Psoas muscle (tissue), 8 donors: ENCODE measurements at regions of chr3 and their contacts with region 1.

Region 1: GRCh38 chr3:51498876-51499738 is 708 bp downstream of the DCAF1 start:
- DNase-seq: peak; percentile 94 to 97
- ATAC-seq: peak; percentile 82 to 84 (median 84)
- H3K4me3 ChIP-seq: peak overlapping the region; percentile 93
- H3K27ac ChIP-seq: peak overlapping the region; percentile 99
- H3K4me1 ChIP-seq: peaks cover 9% of the 10 kb centered on the region
- H3K27me3 ChIP-seq: no peaks in the 10 kb centered on the region
- CTCF ChIP-seq: no peak

Region 2: GRCh38 chr3:51401735-51402134 is 97.4 kb before region 1 on chr3:
- intact Hi-C with region 1: loop called in 1 of 2 experiments (anchors 5 kb)
- DNase-seq: no peak
- ATAC-seq: no peak
- H3K4me3 ChIP-seq: no peak overlapping the region
- H3K27ac ChIP-seq: no peak overlapping the region
- H3K4me1 ChIP-seq: peaks cover 1% of the 10 kb centered on the region
- H3K27me3 ChIP-seq: no peaks in the 10 kb centered on the region
- CTCF ChIP-seq: no peak

Region 3: DNA sequence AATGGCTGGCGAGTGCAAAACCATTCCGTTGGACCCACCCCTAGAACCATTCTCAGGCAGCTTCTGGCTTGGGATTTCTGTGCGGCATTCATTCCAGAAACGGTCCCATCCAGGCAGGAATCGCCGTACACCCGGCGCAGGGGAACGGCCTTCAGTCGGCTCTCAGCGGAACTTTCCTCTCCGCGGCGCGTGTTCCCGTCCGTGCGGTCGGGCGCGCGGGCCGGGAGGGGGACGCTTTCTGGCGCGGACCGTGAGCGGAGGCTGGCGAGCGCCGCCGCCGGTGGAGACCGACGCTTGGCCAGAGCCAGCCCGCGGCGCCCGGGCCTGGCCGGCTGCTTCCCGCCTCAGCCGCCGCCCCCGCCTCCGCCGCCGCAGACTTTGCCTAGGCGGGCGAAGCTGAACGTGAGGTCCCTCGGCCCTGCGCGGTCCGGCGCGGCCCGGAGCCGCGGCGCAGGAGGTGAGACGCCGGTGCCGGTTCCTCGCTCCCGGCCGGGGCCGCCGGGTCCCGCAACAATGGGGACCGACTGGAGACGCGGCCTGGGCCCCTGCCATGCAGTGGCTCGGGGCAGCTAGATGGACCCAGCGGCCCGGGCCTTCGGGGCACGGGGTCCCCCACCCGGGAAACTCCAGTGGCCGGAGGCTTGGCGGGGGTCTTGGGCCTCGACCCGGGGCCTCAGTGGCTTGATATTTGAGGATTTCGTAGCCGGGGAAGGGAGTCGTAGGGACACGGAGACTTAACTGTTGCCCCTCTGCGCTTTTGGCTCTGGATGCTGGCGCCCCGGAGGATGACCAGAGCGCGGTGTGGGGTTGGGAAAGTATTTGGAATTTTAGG is 39.6 kb after region 1 on chr3 and contains the start of gene RAD54L2:
- intact Hi-C with region 1: loop called in 1 of 2 experiments (anchors 5 kb)
- DNase-seq: peak; percentile 86 to 90
- ATAC-seq: peak; percentile 97 to 99 (median 98)
- H3K4me3 ChIP-seq: peak within 1 kb of the TSS; percentile 100
- H3K27ac ChIP-seq: peak within 1 kb of the TSS; percentile 91
- H3K4me1 ChIP-seq: peaks cover 17% of the 10 kb centered on the region
- H3K27me3 ChIP-seq: no peaks in the 10 kb centered on the region
- CTCF ChIP-seq: peak; percentile 42
- total RNA-seq, gene RAD54L2: 11.4 to 15.6 (median 13.5) TPM

Region 4: GRCh38 chr3:51637941-51638471 is 138.9 kb after region 1 on chr3:
- intact Hi-C with region 1: loop called in 1 of 2 experiments (anchors 10 kb)
- DNase-seq: no peak
- ATAC-seq: peak in 3 of 4 donors; percentile 30 to 72 (median 33)
- H3K4me3 ChIP-seq: no peak overlapping the region
- H3K27ac ChIP-seq: no peak overlapping the region
- H3K4me1 ChIP-seq: no peaks in the 10 kb centered on the region
- H3K27me3 ChIP-seq: no peaks in the 10 kb centered on the region
- CTCF ChIP-seq: peak; percentile 45

Region 5: GRCh38 chr3:51670823-51671733 is 172.0 kb after region 1 on chr3 and contains the start of gene TEX264:
- intact Hi-C with region 1: loop called (anchors 1 to 2 kb)
- DNase-seq: peak; percentile 93 to 95
- ATAC-seq: peak; percentile 88 to 92 (median 90)
- H3K4me3 ChIP-seq: peak within 1 kb of the TSS; percentile 89
- H3K27ac ChIP-seq: peak within 1 kb of the TSS; percentile 82
- H3K4me1 ChIP-seq: peaks cover 23% of the 10 kb centered on the region
- H3K27me3 ChIP-seq: no peaks in the 10 kb centered on the region
- CTCF ChIP-seq: no peak
- total RNA-seq, gene TEX264: 16.8 to 29.6 (median 21.9) TPM

Region 6: GRCh38 chr3:51799879-51800749 is 301.0 kb after region 1 on chr3:
- intact Hi-C with region 1: loop called (anchors 2 to 5 kb)
- DNase-seq: no peak
- ATAC-seq: peak in 2 of 4 donors; percentile 40 to 67
- H3K4me3 ChIP-seq: no peak overlapping the region
- H3K27ac ChIP-seq: no peak overlapping the region
- H3K4me1 ChIP-seq: no peaks in the 10 kb centered on the region
- H3K27me3 ChIP-seq: no peaks in the 10 kb centered on the region
- CTCF ChIP-seq: peak; percentile 70

Region 7: GRCh38 chr3:51869304-51869703 is 370.2 kb after region 1 on chr3:
- intact Hi-C with region 1: no loop called
- DNase-seq: no peak
- ATAC-seq: no peak
- H3K4me3 ChIP-seq: no peak overlapping the region
- H3K27ac ChIP-seq: no peak overlapping the region
- H3K4me1 ChIP-seq: no peaks in the 10 kb centered on the region
- H3K27me3 ChIP-seq: peaks cover 0 to 3% (median 0%) of the 10 kb centered on the region in 3 donors
- CTCF ChIP-seq: no peak

Region 8: DNA sequence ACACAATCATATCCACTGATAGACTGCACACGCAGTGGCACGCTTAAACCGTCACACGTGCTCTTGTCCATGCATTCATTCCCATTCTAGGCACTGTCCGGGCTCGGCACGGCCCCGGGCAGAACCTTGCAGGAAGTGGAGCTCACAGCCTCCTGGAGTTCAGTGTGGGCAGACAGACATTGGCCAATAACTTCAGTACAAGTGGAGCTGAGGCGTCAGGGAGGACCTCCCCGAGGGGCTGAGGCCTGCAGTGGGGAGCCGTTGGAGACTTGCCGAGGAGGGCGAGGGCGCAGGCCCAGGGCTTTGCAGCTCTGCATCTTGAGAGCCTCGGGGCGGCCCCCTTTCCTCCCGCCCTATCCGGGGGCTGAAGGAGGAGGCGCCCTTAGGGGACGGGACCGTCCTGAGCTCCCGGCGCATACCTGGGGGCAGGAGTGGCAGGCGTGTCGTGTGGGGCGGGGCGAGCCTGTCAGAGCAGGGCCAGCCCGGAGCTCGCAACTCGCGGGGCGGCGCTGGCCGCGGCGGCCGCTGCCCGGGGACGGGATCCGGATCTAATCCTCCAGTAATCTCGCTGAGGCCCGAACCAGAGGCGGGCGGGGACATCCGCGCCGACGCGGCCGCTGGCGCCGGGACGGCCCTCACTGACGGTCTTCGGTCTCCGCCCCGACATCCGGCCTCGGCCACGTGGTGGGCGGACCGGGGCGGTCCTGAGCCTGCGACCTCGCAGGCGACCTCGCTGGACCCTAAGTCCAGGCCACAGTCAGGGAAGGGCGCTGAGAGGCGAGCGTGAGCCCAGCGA is 483.9 kb after region 1 on chr3 and contains the start of gene ACY1:
- intact Hi-C with region 1: loop called in 1 of 2 experiments (anchors 5 kb)
- DNase-seq: peak; percentile 92 to 95
- ATAC-seq: peak; percentile 89 to 94 (median 92)
- H3K4me3 ChIP-seq: peak within 1 kb of the TSS; percentile 84
- H3K27ac ChIP-seq: peak within 1 kb of the TSS; percentile 96
- H3K4me1 ChIP-seq: peaks cover 20% of the 10 kb centered on the region
- H3K27me3 ChIP-seq: no peaks in the 10 kb centered on the region
- CTCF ChIP-seq: no peak
- total RNA-seq, gene ACY1: 29.4 to 56.5 (median 38.5) TPM